Transverse colon (tissue), 4 donors: ENCODE measurements at regions of chr12 and their contacts with region 1.

Region 1: GRCh38 chr12:53054112-53054833 is 4.4 kb downstream of the TNS2 start:
- DNase-seq: peak; percentile 97
- H3K4me3 ChIP-seq: peak overlapping the region; percentile 18 to 57 (median 42)
- H3K27ac ChIP-seq: peak overlapping the region; percentile 89 to 98 (median 96)
- H3K4me1 ChIP-seq: peaks cover 22 to 61% (median 47%) of the 10 kb centered on the region in 4 donors
- H3K27me3 ChIP-seq: no peaks in the 10 kb centered on the region
- CTCF ChIP-seq: peak in 2 of 5 experiments; percentile 14
- EP300 ChIP-seq: no peak
- POLR2A ChIP-seq: peak; percentile 81

Region 2: DNA sequence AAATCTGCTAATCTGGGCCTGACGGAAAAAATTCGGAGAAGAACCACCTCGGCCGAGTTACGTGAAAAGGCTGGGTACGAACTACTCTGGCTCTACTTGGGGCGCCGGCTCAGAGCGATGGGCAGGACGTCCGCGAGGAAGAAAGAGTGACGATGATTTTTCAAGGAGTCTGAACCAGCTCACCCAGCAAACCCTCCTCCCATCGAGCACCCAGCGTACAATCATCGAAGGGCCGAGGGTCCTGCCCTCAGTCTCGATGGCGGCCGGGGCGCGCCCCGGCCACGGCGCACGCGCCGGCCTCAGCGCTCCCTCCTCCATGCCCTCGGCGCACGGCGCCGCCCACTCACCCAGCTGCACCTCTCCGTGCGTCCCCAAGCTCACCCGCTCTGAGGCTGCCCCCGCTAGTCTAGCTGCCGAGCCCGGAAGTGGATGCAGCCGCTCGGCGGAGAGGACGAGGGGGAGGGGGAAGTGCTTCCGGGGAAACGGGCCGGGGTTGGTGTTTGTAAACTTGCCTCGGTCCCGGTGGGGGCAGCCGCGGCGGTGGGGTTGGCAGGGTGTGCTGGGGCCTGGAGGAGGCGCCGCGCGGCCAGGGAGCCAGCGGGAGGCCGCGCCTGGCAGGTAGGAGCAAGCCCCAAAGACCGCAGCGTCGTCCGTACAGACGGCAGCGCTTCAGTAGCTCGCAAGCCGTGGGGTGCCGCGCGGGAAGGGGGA is 126.1 kb after region 1 on chr12 and contains the starts of genes CSAD and ZNF740:
- in situ Hi-C with region 1: loop called in 1 of 4 experiments (anchors 25 kb)
- intact Hi-C with region 1: no loop called
- DNase-seq: peak; percentile 98
- H3K4me3 ChIP-seq: peak within 1 kb of the TSS; percentile 72 to 90 (median 82)
- H3K27ac ChIP-seq: peak within 1 kb of the TSS; percentile 92 to 99 (median 96)
- H3K4me1 ChIP-seq: peaks cover 33 to 41% (median 36%) of the 10 kb centered on the region in 4 donors
- H3K27me3 ChIP-seq: no peaks in the 10 kb centered on the region
- CTCF ChIP-seq: no peak
- EP300 ChIP-seq: no peak
- POLR2A ChIP-seq: peak; percentile 85
- total RNA-seq, gene CSAD: 29.1 to 142 (median 39.2) TPM
- total RNA-seq, gene ZNF740: 9.7 to 21.9 (median 16.3) TPM

Region 3: GRCh38 chr12:53295070-53295890 is 241.0 kb after region 1 on chr12 and contains the start of gene PFDN5:
- in situ Hi-C with region 1: loop called in 1 of 4 experiments (anchors 25 kb)
- intact Hi-C with region 1: no loop called
- DNase-seq: peak; percentile 92
- H3K4me3 ChIP-seq: peak within 1 kb of the TSS; percentile 38 to 84 (median 68)
- H3K27ac ChIP-seq: peak within 1 kb of the TSS; percentile 85 to 93 (median 87)
- H3K4me1 ChIP-seq: peaks cover 9 to 41% (median 24%) of the 10 kb centered on the region in 4 donors
- H3K27me3 ChIP-seq: no peaks in the 10 kb centered on the region
- CTCF ChIP-seq: peak in 2 of 5 experiments; percentile 40 to 51
- EP300 ChIP-seq: no peak
- POLR2A ChIP-seq: peak; percentile 81
- total RNA-seq, gene PFDN5: 244 to 451 (median 381) TPM